ENCODE measurements at regions of chr17 and their contacts with region 1.

Region 1: DNA sequence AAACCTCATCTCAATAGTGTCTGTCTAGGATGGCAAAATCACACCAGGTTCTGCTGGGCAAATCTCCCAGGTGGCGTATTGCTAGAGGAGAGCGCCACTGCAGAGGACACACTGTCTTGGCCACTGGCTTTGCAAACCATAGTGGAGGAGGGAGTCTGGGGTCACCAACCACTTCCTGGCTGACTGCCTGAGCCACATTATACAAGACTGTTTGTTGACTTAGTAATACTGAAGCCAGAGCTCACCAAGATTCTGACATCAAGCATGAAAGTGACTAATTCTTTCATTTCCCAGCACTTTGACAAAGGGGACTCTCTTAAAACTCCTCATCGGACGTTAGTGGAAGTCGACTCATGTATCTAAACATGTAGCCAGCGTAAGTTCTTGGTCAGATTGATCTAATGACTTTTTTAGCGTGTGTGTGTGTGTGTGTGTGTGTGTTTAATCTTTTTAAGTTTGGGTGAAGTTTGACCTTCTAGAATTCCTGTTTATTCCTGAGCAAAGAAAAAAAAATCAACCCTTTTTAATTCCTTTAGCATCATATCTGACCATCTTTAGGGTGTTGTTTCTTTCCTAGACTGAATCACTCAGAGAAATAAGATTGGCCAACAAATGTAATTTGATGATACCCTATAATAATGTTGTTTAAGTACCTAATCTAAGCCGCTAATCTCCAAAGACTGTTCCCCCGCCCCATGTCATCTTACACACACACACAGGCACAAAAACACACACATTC is 13.7 kb downstream of the PITPNC1 start:
- DNase-seq: peak; percentile 70
- H3K4me3 Mint-ChIP-seq: peak overlapping the region; percentile 33
- H3K27ac Mint-ChIP-seq: peak overlapping the region; percentile 34
- H3K4me1 Mint-ChIP-seq: peaks cover 20% of the 10 kb centered on the region
- H3K27me3 Mint-ChIP-seq: no peaks in the 10 kb centered on the region
- CTCF ChIP-seq: no peak

Region 2: GRCh38 chr17:67374329-67375053 is 16.3 kb before region 1 on chr17:
- CTCF ChIA-PET with region 1: no interaction called
- intact Hi-C with region 1: no loop called
- DNase-seq: peak; percentile 87
- H3K4me3 Mint-ChIP-seq: no peak overlapping the region
- H3K27ac Mint-ChIP-seq: no peak overlapping the region
- H3K4me1 Mint-ChIP-seq: peaks cover 19% of the 10 kb centered on the region
- H3K27me3 Mint-ChIP-seq: no peaks in the 10 kb centered on the region
- CTCF ChIP-seq: peak; percentile 49

Region 3: GRCh38 chr17:67421869-67422273 is 31.1 kb after region 1 on chr17:
- CTCF ChIA-PET with region 1: interaction called, 3 read pairs
- intact Hi-C with region 1: loop called (anchors 1 kb)
- DNase-seq: peak; percentile 66
- H3K4me3 Mint-ChIP-seq: no peak overlapping the region
- H3K27ac Mint-ChIP-seq: peak overlapping the region; percentile 26
- H3K4me1 Mint-ChIP-seq: peaks cover 64% of the 10 kb centered on the region
- H3K27me3 Mint-ChIP-seq: no peaks in the 10 kb centered on the region
- CTCF ChIP-seq: no peak

Region 4: GRCh38 chr17:67469208-67469895 is 78.5 kb after region 1 on chr17:
- CTCF ChIA-PET with region 1: interaction called, 10 read pairs
- intact Hi-C with region 1: no loop called
- DNase-seq: no peak
- H3K4me3 Mint-ChIP-seq: no peak overlapping the region
- H3K27ac Mint-ChIP-seq: no peak overlapping the region
- H3K4me1 Mint-ChIP-seq: peaks cover 5% of the 10 kb centered on the region
- H3K27me3 Mint-ChIP-seq: no peaks in the 10 kb centered on the region
- CTCF ChIP-seq: no peak

Measured in Calu3 (cell line).